PC-9 (cell line): ENCODE measurements at regions of chr9 and their contacts with region 1.

Region 1: GRCh38 chr9:136849038-136849959 is at the start of gene PHPT1:
- DNase-seq: peak; percentile 96 to 99
- H3K4me3 ChIP-seq: peak within 1 kb of the TSS; percentile 87
- H3K27ac ChIP-seq: peak within 1 kb of the TSS; percentile 80
- H3K4me1 ChIP-seq: peaks cover 6% of the 10 kb centered on the region; the same call in 1 of the 2 replicates
- H3K27me3 ChIP-seq: no peaks in the 10 kb centered on the region
- CTCF ChIP-seq: no peak
- total RNA-seq, gene PHPT1: 112 and 114 TPM in 2 replicates

Region 2: DNA sequence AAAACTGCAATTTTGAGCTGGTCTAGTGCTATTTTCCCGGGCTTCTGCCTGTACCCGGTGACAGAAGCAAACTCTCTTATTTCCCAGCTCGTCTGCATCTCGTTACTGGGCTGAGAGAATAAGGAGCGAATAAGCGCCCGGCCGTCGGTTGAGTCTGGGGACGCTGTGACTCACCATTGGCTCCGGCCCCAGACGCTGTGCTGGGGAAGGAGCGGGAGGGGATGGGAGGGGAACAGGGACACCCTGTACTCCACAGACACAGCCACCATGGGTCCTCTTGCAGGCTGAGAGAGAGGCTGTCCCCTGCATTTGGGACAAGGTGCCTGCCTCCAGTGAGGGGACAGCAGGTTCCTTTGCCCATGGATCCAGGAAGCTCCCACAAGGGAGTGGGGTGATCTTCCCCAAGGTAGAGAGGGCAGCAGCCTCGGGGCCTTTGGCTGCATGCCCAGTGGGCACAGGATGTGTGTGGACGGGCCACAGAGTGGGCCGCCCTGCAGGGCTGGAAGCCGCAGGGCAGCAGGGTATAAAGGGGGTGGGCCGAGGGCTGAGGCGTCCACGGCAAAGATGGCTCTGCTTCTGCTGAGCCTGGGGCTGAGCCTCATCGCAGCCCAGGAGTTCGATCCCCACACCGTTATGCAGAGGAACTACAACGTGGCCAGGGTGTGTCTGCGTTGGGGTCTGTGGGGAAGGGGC is 1186.4 kb before region 1 on chr9 and contains the start of gene LCN9:
- CTCF ChIA-PET with region 1: no interaction called
- POLR2A ChIA-PET with region 1: no interaction called
- intact Hi-C with region 1: no loop called
- DNase-seq: no peak
- H3K4me3 ChIP-seq: no peak within 1 kb of the TSS
- H3K27ac ChIP-seq: no peak within 1 kb of the TSS
- H3K4me1 ChIP-seq: no peaks in the 10 kb centered on the region
- H3K27me3 ChIP-seq: peaks cover 95% of the 10 kb centered on the region
- CTCF ChIP-seq: no peak
- total RNA-seq, gene LCN9: not detected in 2 replicates

Region 3: DNA sequence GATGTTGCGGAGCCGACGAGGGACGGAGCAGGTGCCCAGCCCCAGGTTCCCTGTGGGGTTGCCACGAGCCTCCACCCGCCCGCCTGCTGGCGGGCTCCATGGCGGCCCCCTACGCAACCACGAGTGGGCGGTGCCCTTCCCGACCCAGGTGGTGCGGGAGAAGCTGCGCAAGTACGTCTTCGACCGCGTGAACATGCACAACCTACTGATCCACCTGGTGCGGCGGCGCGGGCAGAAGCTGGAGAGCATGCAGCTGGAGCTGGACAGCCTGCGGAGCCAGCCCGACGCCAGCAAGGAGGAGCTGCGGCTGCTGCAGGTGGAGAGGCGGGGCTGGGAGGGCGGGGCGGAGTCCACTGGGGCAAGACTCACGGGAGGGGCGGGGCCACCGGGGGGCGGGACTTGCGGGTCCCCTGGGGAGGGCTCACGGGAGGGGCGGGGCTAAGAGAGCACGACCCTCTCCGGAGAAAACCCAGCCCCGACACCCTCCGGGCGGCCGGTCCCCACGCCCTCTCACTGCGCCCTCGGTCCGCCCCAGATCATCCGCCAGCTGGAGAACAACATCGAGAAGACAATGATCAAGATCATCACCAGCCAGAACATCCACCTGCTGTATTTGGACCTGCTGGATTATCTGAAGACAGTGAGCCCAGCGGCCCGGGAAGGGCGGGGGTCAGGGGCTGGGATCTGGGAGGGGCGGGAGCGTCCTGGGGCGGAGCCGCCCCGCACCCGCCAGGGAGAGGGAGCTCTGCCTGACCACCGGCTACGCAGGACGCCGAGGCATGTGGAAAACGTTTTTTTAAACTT is 49.2 kb before region 1 on chr9:
- CTCF ChIA-PET with region 1: no interaction called
- POLR2A ChIA-PET with region 1: interaction called, 3 read pairs
- intact Hi-C with region 1: loop called (anchors 2 kb)
- DNase-seq: peak; percentile 81 to 91
- H3K4me3 ChIP-seq: peak overlapping the region; percentile 69
- H3K27ac ChIP-seq: no peak overlapping the region
- H3K4me1 ChIP-seq: peaks cover 21% of the 10 kb centered on the region
- H3K27me3 ChIP-seq: no peaks in the 10 kb centered on the region
- CTCF ChIP-seq: no peak

Region 4: GRCh38 chr9:136875159-136875559 is 25.9 kb after region 1 on chr9:
- CTCF ChIA-PET with region 1: no interaction called
- POLR2A ChIA-PET with region 1: no interaction called
- intact Hi-C with region 1: no loop called
- DNase-seq: no peak
- H3K4me3 ChIP-seq: no peak overlapping the region
- H3K27ac ChIP-seq: no peak overlapping the region
- H3K4me1 ChIP-seq: 0 out of 2 replicates have a peak, but pooled peaks cover 5% of the 10 kb centered on the region
- H3K27me3 ChIP-seq: no peaks in the 10 kb centered on the region
- CTCF ChIP-seq: no peak

Region 5: GRCh38 chr9:136885950-136886578 is 36.8 kb after region 1 on chr9 and contains the start of gene TRAF2:
- CTCF ChIA-PET with region 1: no interaction called
- POLR2A ChIA-PET with region 1: interaction called, 6 read pairs
- intact Hi-C with region 1: loop called (anchors 1 kb)
- DNase-seq: peak; percentile 96 to 99
- H3K4me3 ChIP-seq: peak within 1 kb of the TSS; percentile 96
- H3K27ac ChIP-seq: peak within 1 kb of the TSS; percentile 46
- H3K4me1 ChIP-seq: peaks cover 39% of the 10 kb centered on the region
- H3K27me3 ChIP-seq: no peaks in the 10 kb centered on the region
- CTCF ChIP-seq: no peak
- total RNA-seq, gene TRAF2: 42.7 and 48.0 TPM in 2 replicates

Region 6: DNA sequence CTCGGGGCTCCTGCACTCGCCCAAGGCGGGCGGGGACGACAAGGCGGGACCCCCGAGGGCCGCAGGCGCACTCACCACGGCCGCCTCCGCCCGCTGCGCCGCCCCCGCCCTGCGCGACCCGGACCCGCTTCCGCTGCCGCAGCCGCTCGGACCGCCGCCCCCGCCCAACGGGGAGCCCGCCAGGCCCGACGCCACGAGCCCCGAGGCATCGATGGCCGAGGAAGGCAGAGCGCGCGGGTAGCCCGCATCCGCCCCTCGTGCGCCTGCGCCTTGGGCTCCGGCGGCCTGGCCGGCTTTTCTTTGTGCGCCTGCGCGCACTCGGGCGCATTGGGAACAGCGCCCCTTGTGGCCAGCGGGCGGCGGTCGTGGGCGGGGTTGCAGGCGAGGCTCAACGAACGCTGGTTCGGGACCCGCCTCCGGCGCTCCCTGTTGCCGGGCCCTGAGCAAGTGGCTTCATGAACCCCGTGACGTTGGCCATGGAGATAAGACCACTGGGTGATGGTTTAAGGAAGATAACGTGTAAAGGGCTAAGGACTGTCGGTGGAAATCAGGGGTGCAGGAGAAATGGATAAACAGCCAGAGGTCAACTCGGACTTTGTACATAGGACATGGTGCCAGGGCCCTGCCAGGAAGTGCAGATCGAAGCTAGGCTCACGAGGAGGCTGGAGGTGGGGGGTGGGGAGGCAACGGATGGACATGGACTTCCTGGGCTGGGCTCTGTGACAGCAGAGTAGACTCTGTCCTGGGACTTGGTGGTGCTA is 95.4 kb after region 1 on chr9 and contains the starts of genes C8G and FBXW5:
- CTCF ChIA-PET with region 1: interaction called, 9 read pairs
- POLR2A ChIA-PET with region 1: interaction called, 12 read pairs
- intact Hi-C with region 1: loop called (anchors 1 kb)
- DNase-seq: peak; percentile 75 to 98
- H3K4me3 ChIP-seq: peak within 1 kb of the TSS; percentile 87
- H3K27ac ChIP-seq: peak within 1 kb of the TSS; percentile 26; the same call in 1 of the 2 replicates
- H3K4me1 ChIP-seq: peaks cover 21% of the 10 kb centered on the region
- H3K27me3 ChIP-seq: no peaks in the 10 kb centered on the region
- CTCF ChIP-seq: peak; percentile 93
- total RNA-seq, gene C8G: 2.3 and 4.4 TPM in 2 replicates
- total RNA-seq, gene FBXW5: 101 and 125 TPM in 2 replicates

Region 7: GRCh38 chr9:136991993-136992818 is 142.9 kb after region 1 on chr9 and contains the start of gene PAXX:
- CTCF ChIA-PET with region 1: no interaction called
- POLR2A ChIA-PET with region 1: interaction called, 25 read pairs
- intact Hi-C with region 1: loop called (anchors 5 kb)
- DNase-seq: peak; percentile 77 to 97
- H3K4me3 ChIP-seq: peak within 1 kb of the TSS; percentile 88
- H3K27ac ChIP-seq: peak within 1 kb of the TSS; percentile 42
- H3K4me1 ChIP-seq: peaks cover 22% of the 10 kb centered on the region
- H3K27me3 ChIP-seq: no peaks in the 10 kb centered on the region
- CTCF ChIP-seq: no peak
- total RNA-seq, gene PAXX: 54.9 and 78.9 TPM in 2 replicates

Region 8: DNA sequence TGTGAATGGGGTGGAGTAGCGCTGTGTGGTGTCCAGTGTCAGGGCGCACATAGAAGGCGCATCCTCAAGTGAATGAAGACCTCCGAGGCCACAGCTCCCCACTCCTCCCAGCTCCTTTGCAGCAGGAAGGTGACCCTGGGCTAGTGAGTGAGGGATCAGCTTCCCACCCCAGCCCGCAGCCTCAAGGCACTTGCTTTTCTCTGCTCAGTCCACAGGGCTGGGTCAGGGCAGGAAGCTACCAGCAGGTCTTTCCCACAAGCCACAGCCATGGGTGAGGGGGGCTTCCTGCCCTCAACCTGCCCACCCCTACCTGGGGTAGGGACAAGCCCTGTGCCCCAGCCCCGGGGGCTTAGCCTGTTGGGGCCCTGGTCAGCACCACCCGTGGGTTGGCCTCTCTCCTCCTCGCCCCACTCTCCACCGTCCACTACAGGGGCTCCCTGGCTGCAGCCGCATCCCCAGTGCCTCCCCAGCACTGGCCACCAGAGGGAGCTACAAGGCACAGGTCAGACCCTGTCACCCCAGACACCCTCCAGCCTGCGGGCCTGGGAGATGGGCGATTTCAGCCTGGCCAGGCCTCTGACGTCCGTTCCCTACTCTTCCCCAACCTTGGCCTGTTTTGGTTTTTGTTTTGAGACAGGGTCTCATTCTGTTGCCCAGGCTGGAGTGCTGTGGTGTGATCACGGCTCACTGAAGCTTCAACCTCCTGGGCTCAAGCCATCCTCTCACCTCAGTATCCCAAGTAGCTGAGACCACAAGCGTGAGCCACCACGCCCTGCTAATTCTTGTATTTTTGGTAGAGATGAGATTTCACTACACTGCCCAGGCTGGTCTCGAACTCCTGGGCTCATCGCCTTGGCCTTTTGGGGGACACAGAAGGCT is 180.0 kb after region 1 on chr9:
- CTCF ChIA-PET with region 1: no interaction called
- POLR2A ChIA-PET with region 1: no interaction called
- intact Hi-C with region 1: loop called (anchors 5 kb)
- DNase-seq: peak in 1 of 2 experiments; percentile 86
- H3K4me3 ChIP-seq: no peak overlapping the region; the same call in 1 of the 2 replicates
- H3K27ac ChIP-seq: no peak overlapping the region
- H3K4me1 ChIP-seq: peaks cover 8% of the 10 kb centered on the region; the same call in 1 of the 2 replicates
- H3K27me3 ChIP-seq: no peaks in the 10 kb centered on the region
- CTCF ChIP-seq: peak; percentile 86